PC-3 (cell line): ENCODE measurements at regions of chr5 and their contacts with region 1.

Region 1: DNA sequence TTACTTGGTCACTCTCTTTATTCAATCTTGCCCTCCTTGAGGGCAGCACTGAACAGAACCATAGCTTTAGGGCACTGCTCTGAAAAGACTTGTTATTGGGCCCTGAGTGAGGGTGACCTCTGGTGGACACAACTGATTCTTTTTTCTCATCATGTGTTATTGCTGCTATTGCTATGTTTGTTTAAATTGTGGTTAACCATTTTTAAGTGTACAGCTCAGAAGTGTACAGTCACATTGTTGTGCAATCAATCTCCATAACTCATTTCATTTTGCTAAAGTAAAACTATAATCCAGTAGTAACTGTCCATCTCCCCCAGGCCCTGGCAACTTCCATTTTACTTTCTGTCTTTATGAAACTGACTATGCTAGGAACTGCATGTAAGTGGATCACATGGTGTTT is 351.1 kb upstream of the RIOK2 start:
- DNase-seq: peak; percentile 88
- ATAC-seq: peak; percentile 92
- H3K4me3 ChIP-seq: no peak overlapping the region
- H3K27ac ChIP-seq: peak overlapping the region; percentile 26
- H3K4me1 ChIP-seq: peaks cover 10% of the 10 kb centered on the region
- H3K27me3 ChIP-seq: no peaks in the 10 kb centered on the region
- CTCF ChIP-seq: peak; percentile 82

Region 2: DNA sequence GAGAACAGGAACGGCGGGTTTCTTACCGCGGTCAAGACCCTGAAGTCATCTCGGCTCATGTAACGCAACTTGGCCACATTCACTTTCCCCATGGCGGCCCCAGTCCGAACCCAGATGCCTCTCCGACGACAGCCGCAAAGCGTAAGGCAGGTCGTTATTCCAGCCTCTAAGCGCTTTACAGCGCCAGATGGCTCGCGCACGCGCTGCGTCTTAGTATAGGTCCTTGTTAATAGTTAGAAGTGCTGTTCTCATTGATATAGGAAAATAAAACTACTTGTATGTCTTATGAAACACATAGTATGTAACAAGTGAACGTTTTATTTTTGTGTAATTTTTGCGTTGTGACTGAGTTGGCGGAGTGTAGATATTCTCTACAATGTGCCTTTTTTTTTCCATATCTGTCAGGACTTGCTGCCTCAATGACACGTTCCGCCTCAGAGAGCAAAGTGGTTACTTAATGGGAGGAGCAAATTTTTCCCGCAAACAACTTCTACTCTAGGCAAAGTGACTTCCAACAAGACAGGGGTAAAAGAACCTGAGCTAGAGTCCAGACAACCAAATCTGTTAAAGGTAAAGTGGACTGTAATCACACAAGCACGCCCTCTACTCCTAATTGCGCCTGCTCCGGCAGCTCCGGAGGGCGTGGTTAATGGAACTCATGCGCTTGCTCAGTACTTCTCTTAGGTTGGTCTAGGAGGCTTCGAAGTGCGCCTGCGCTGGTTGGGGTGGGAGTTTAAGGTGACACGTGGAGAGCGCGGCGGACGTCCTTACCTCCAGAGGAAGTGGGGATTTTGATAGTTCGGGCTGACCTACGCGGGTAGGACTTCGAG is 350.9 kb before region 1 on chr5 and contains the start of gene RIOK2:
- CTCF ChIA-PET with region 1: no interaction called
- POLR2A ChIA-PET with region 1: no interaction called
- intact Hi-C with region 1: loop called (anchors 5 kb)
- DNase-seq: peak; percentile 95
- ATAC-seq: peak; percentile 90
- H3K4me3 ChIP-seq: peak within 1 kb of the TSS; percentile 84
- H3K27ac ChIP-seq: peak within 1 kb of the TSS; percentile 85
- H3K4me1 ChIP-seq: peaks cover 14% of the 10 kb centered on the region
- H3K27me3 ChIP-seq: no peaks in the 10 kb centered on the region
- CTCF ChIP-seq: no peak
- total RNA-seq, gene RIOK2: 16.1 and 22.3 TPM in 2 replicates

Region 3: GRCh38 chr5:97297063-97297703 is 237.0 kb before region 1 on chr5:
- CTCF ChIA-PET with region 1: interaction called, 3 read pairs
- POLR2A ChIA-PET with region 1: no interaction called
- intact Hi-C with region 1: loop called (anchors 5 kb)
- DNase-seq: peak; percentile 72
- ATAC-seq: peak; percentile 85
- H3K4me3 ChIP-seq: no peak overlapping the region
- H3K27ac ChIP-seq: no peak overlapping the region
- H3K4me1 ChIP-seq: no peaks in the 10 kb centered on the region
- H3K27me3 ChIP-seq: no peaks in the 10 kb centered on the region
- CTCF ChIP-seq: peak; percentile 76

Region 4: GRCh38 chr5:97400537-97400936 is 133.6 kb before region 1 on chr5:
- CTCF ChIA-PET with region 1: no interaction called
- POLR2A ChIA-PET with region 1: no interaction called
- intact Hi-C with region 1: no loop called
- DNase-seq: no peak
- ATAC-seq: no peak
- H3K4me3 ChIP-seq: no peak overlapping the region
- H3K27ac ChIP-seq: no peak overlapping the region
- H3K4me1 ChIP-seq: no peaks in the 10 kb centered on the region
- H3K27me3 ChIP-seq: no peaks in the 10 kb centered on the region
- CTCF ChIP-seq: no peak

Region 5: DNA sequence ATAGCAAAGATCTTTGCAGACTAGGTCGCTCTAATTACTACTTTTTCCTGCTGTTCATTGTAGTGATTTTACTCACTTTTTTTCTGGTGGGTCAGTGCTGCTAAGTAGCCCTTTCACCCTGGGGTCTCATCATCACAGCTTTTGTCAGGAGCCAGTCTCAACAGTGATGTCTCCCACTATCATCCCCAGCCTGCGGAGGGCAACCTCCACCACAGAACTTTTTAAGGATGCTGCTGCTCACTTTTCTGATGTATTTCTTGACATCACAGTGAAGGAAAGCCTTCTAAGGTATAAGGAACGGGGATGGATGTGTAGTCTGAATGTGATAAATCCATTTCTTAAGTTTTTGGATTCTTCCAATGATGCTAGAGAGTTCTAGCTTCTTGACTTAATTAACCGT is 108.7 kb before region 1 on chr5:
- CTCF ChIA-PET with region 1: interaction called, 5 read pairs
- POLR2A ChIA-PET with region 1: no interaction called
- intact Hi-C with region 1: loop called (anchors 2 kb)
- DNase-seq: peak; percentile 38
- ATAC-seq: no peak; the same call in 1 of the 2 replicates
- H3K4me3 ChIP-seq: no peak overlapping the region
- H3K27ac ChIP-seq: no peak overlapping the region
- H3K4me1 ChIP-seq: no peaks in the 10 kb centered on the region
- H3K27me3 ChIP-seq: no peaks in the 10 kb centered on the region
- CTCF ChIP-seq: peak; percentile 56

Region 6: GRCh38 chr5:97600486-97600885 is 66.3 kb after region 1 on chr5:
- CTCF ChIA-PET with region 1: no interaction called
- POLR2A ChIA-PET with region 1: no interaction called
- intact Hi-C with region 1: no loop called
- DNase-seq: peak; percentile 11
- ATAC-seq: peak; percentile 43
- H3K4me3 ChIP-seq: no peak overlapping the region
- H3K27ac ChIP-seq: no peak overlapping the region
- H3K4me1 ChIP-seq: no peaks in the 10 kb centered on the region
- H3K27me3 ChIP-seq: no peaks in the 10 kb centered on the region
- CTCF ChIP-seq: no peak

Region 7: GRCh38 chr5:97986069-97986468 is 451.9 kb after region 1 on chr5:
- CTCF ChIA-PET with region 1: no interaction called
- POLR2A ChIA-PET with region 1: no interaction called
- intact Hi-C with region 1: loop called (anchors 10 kb)
- DNase-seq: peak; percentile 85
- ATAC-seq: peak; percentile 87
- H3K4me3 ChIP-seq: no peak overlapping the region
- H3K27ac ChIP-seq: peak overlapping the region; percentile 16
- H3K4me1 ChIP-seq: peaks cover 10% of the 10 kb centered on the region; the same call in 1 of the 2 replicates
- H3K27me3 ChIP-seq: no peaks in the 10 kb centered on the region
- CTCF ChIP-seq: peak; percentile 68